Tibial artery (tissue), 4 donors: ENCODE measurements at regions of chr7 and their contacts with region 1.

Region 1: DNA sequence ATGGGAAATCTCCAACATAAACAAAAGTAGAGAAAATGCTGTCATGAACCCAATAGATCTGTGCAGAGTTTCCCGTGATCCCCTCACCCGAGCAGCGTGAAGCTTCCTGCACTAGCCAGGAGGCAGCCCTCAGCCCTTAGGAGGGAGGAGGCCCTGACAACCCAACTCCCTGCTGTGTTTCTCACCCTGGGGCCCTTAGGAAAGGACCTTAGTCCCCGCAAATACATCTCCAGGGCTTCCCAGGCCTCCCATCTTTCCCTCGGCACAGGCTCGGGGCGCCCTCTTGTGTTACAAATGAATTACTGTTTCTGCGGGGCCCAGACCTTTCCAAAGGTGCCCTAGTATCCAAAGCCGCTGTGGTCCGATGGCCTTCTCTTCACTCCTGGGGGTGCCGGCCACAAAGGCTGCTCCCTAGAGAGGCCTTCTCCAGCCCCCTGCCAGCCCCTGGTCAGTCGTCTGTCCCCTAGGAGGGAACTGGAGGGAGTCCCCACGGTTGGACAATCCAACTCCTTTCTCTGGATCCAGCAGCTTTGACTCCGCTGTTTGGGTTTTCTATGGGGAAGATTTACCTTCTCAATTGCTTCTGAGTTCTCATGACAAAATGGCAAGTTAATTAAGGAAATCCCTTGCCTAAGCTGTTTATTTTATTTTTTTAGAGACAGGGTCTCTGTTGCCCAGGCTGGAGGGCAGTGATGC is 49.9 kb upstream of the SH2B2 start:
- DNase-seq: peak; percentile 59 to 77
- H3K4me3 ChIP-seq: no peak overlapping the region
- H3K27ac ChIP-seq: no peak overlapping the region
- H3K4me1 ChIP-seq: peaks cover 0 to 5% (median 0%) of the 10 kb centered on the region in 4 donors
- H3K27me3 ChIP-seq: no peaks in the 10 kb centered on the region
- CTCF ChIP-seq: peak; percentile 75 to 78

Region 2: GRCh38 chr7:101602484-101603241 is 634.1 kb before region 1 on chr7:
- intact Hi-C with region 1: loop called (anchors 2 kb)
- DNase-seq: peak; percentile 64 to 85
- H3K4me3 ChIP-seq: no peak overlapping the region
- H3K27ac ChIP-seq: peak overlapping the region in 1 of 2 donors; percentile 67
- H3K4me1 ChIP-seq: peaks cover 0 to 34% (median 14%) of the 10 kb centered on the region in 4 donors
- H3K27me3 ChIP-seq: no peaks in the 10 kb centered on the region
- CTCF ChIP-seq: peak; percentile 82 to 94

Region 3: GRCh38 chr7:101743241-101743994 is 493.3 kb before region 1 on chr7:
- intact Hi-C with region 1: loop called (anchors 10 kb)
- DNase-seq: peak in 1 of 2 donors; percentile 34
- H3K4me3 ChIP-seq: peak overlapping the region; percentile 36 to 55
- H3K27ac ChIP-seq: no peak overlapping the region
- H3K4me1 ChIP-seq: peaks cover 0 to 17% (median 15%) of the 10 kb centered on the region in 4 donors
- H3K27me3 ChIP-seq: peaks cover 0 to 51% of the 10 kb centered on the region in 2 donors
- CTCF ChIP-seq: peak; percentile 40 to 52

Region 4: GRCh38 chr7:102129636-102130370 is 106.9 kb before region 1 on chr7:
- intact Hi-C with region 1: no loop called
- DNase-seq: no peak
- H3K4me3 ChIP-seq: no peak overlapping the region
- H3K27ac ChIP-seq: no peak overlapping the region
- H3K4me1 ChIP-seq: peaks cover 0 to 24% (median 8%) of the 10 kb centered on the region in 4 donors
- H3K27me3 ChIP-seq: no peaks in the 10 kb centered on the region
- CTCF ChIP-seq: no peak